Heart right ventricle (tissue), 16 donors: ENCODE measurements at regions of chr2 and their contacts with region 1.

Region 1: GRCh38 chr2:39124000-39124745 is 3.3 kb upstream of the SOS1 start:
- DNase-seq: peak; percentile 94 to 96
- ATAC-seq: peak; percentile 92 to 96 (median 94)
- H3K4me3 ChIP-seq: peak overlapping the region; percentile 47 to 85 (median 80)
- H3K27ac ChIP-seq: peak overlapping the region; percentile 80 to 95 (median 90)
- H3K4me1 ChIP-seq: peaks cover 0 to 49% (median 29%) of the 10 kb centered on the region in 9 donors
- H3K27me3 ChIP-seq: no peaks in the 10 kb centered on the region
- CTCF ChIP-seq: peak in 8 of 9 donors; percentile 45 to 81 (median 64)

Region 2: GRCh38 chr2:39059366-39059952 is 64.7 kb before region 1 on chr2:
- intact Hi-C with region 1: loop called in 4 of 10 experiments (anchors 5 to 10 kb)
- DNase-seq: no peak
- ATAC-seq: no peak
- H3K4me3 ChIP-seq: no peak overlapping the region
- H3K27ac ChIP-seq: no peak overlapping the region
- H3K4me1 ChIP-seq: no peaks in the 10 kb centered on the region
- H3K27me3 ChIP-seq: no peaks in the 10 kb centered on the region
- CTCF ChIP-seq: peak; percentile 45 to 83 (median 76)

Region 3: DNA sequence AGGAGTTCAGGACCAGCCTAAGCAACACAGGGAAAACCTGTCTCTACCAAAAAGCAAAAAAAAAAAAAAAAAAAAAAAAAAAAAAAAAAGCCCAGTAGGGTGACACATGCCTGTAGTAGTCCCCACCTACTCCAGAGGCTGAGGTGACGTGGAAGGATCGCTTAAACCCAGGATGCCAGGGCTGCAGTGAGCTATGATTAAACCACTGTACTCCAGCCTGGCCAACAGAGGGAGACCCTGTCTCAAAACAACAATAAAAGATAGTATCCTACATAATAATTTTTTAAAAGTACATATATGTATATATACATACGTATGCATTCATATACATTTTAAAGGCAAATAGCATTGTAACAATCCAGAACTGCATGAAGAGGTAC is 55.0 kb before region 1 on chr2:
- intact Hi-C with region 1: loop called in 7 of 10 experiments (anchors 5 to 10 kb)
- DNase-seq: no peak
- ATAC-seq: no peak
- H3K4me3 ChIP-seq: no peak overlapping the region
- H3K27ac ChIP-seq: no peak overlapping the region
- H3K4me1 ChIP-seq: peaks cover 0 to 17% (median 4%) of the 10 kb centered on the region in 9 donors
- H3K27me3 ChIP-seq: no peaks in the 10 kb centered on the region
- CTCF ChIP-seq: no peak

Region 4: DNA sequence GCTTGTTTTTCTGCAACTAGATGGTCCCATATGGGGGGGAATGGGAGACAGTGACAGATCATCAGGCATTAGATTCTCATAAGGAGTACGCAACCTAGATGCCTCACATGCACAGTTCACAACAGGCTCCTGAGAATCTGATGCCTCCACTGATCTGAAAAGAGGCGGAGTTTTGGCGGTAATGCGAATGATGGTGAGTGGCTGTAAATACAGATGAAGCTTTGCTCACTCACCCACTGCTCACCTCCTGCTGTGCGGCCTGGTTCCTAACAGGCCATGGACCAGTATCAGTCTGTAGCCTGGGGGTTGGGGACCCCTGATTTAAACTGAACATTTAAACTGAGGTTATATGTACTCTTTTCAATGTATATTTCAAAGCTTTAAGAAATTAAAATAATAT is 44.0 kb before region 1 on chr2:
- intact Hi-C with region 1: loop called in 1 of 10 experiments (anchors 5 kb)
- DNase-seq: no peak
- ATAC-seq: no peak
- H3K4me3 ChIP-seq: no peak overlapping the region
- H3K27ac ChIP-seq: no peak overlapping the region
- H3K4me1 ChIP-seq: peaks cover 0 to 24% (median 14%) of the 10 kb centered on the region in 9 donors
- H3K27me3 ChIP-seq: no peaks in the 10 kb centered on the region
- CTCF ChIP-seq: no peak

Region 5: GRCh38 chr2:39227628-39228412 is 103.6 kb after region 1 on chr2:
- intact Hi-C with region 1: loop called (anchors 1 to 10 kb)
- DNase-seq: peak; percentile 76 to 81
- ATAC-seq: peak; percentile 80 to 92 (median 88)
- H3K4me3 ChIP-seq: peak overlapping the region in 7 of 10 donors; percentile 7 to 40 (median 31)
- H3K27ac ChIP-seq: no peak overlapping the region
- H3K4me1 ChIP-seq: peaks cover 0 to 23% (median 15%) of the 10 kb centered on the region in 9 donors
- H3K27me3 ChIP-seq: no peaks in the 10 kb centered on the region
- CTCF ChIP-seq: peak; percentile 83 to 96 (median 90)

Region 6: GRCh38 chr2:39728941-39729351 is 604.8 kb after region 1 on chr2:
- intact Hi-C with region 1: loop called in 1 of 10 experiments (anchors 10 kb)
- DNase-seq: peak in 1 of 2 donors; percentile 23
- ATAC-seq: peak in 5 of 8 donors; percentile 43 to 56 (median 46)
- H3K4me3 ChIP-seq: no peak overlapping the region
- H3K27ac ChIP-seq: no peak overlapping the region
- H3K4me1 ChIP-seq: peaks cover 0 to 19% (median 0%) of the 10 kb centered on the region in 9 donors
- H3K27me3 ChIP-seq: no peaks in the 10 kb centered on the region
- CTCF ChIP-seq: peak in 8 of 9 donors; percentile 29 to 72 (median 66)